HepG2 (cell line): ENCODE measurements at regions of chrX and their contacts with region 1.

Region 1: DNA sequence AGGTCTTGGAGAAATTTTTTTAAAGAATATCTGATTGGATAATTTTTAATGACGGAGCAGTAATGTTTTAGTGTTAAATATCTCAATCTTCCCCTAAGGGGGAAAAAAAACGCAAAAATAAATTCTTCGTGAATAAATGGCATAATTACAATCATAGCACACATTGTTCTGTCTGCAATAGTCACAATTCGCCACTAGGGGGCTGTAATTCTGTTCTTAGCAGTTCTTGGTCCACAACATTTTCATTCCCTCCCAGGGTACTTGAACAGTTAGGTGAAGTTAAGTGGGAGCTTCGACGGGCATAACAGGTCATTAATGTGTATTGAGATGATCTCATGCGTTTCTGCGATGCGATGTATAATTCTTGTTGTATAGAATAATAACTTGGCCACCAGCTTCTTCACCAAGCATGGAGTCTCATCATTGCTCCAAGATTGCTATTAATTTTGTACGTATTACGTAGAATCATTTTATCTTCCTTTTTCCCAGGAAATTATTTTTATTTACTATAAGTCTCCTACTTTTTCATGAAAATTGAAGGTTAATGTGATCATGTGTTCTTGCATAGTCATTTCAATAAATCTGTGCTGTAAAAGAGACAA is 27.2 kb downstream of the HTR2C start:
- DNase-seq: peak; percentile 3
- ATAC-seq: no peak
- H3K4me3 ChIP-seq: no peak overlapping the region
- H3K27ac ChIP-seq: no peak overlapping the region
- H3K4me1 ChIP-seq: no peaks in the 10 kb centered on the region
- H3K27me3 ChIP-seq: no peaks in the 10 kb centered on the region
- CTCF ChIP-seq: peak; percentile 55
- EP300 ChIP-seq: no peak
- POLR2A ChIP-seq: no peak
- RAD21 ChIP-seq: no peak

Region 2: DNA sequence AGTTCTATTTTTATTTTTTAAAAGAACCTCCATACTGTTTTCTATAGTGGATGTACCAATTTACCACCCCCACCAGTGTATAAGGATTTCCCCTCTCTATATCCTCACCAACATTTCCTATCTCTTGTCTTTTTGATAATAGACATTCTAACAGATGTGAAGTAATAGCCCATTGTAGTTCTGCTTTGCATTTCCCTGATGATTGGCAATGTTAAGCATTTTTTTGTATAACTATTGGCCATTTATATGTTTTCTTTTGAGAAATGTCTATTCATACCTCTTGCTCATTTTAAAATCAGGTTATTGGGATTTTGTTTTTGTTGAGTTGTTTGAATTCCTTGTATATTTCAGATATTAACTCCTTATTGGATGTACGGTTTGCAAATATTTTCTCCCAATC is 278.4 kb before region 1 on chrX:
- CTCF ChIA-PET with region 1: no interaction called
- POLR2A ChIA-PET with region 1: no interaction called
- in situ Hi-C with region 1: no loop called
- intact Hi-C with region 1: no loop called
- DNase-seq: no peak
- ATAC-seq: no peak
- H3K4me3 ChIP-seq: no peak overlapping the region
- H3K27ac ChIP-seq: no peak overlapping the region
- H3K4me1 ChIP-seq: no peaks in the 10 kb centered on the region
- H3K27me3 ChIP-seq: no peaks in the 10 kb centered on the region
- CTCF ChIP-seq: no peak
- EP300 ChIP-seq: no peak
- POLR2A ChIP-seq: no peak
- RAD21 ChIP-seq: no peak

Region 3: DNA sequence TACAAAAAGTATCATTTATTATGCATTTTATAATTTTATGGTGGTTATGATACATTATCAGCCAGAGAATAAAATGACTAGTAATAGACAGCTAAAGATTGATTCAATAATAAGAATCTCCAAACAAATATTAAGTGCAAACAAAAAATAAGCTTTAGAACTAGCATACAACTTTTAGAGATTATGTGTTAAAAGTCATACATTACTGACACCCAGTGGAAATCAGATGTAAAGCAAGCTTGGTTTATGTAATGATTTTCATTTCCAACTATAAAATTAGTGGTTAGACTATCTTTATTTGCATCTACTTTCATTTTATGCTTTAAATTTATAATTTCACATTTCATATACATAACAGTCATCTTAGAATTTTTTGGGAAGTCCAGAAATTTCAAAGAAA is 348.6 kb after region 1 on chrX:
- CTCF ChIA-PET with region 1: no interaction called
- POLR2A ChIA-PET with region 1: no interaction called
- in situ Hi-C with region 1: no loop called
- intact Hi-C with region 1: loop called (anchors 10 kb)
- DNase-seq: no peak
- ATAC-seq: no peak
- H3K4me3 ChIP-seq: no peak overlapping the region
- H3K27ac ChIP-seq: no peak overlapping the region
- H3K4me1 ChIP-seq: no peaks in the 10 kb centered on the region
- H3K27me3 ChIP-seq: no peaks in the 10 kb centered on the region
- CTCF ChIP-seq: no peak
- EP300 ChIP-seq: no peak
- POLR2A ChIP-seq: no peak
- RAD21 ChIP-seq: no peak